Heart right ventricle (tissue), 16 donors: ENCODE measurements at regions of chr2 and their contacts with region 1.

Region 1: GRCh38 chr2:190843874-190844699 is 36.5 kb upstream of the GLS start:
- DNase-seq: no peak
- ATAC-seq: no peak
- H3K4me3 ChIP-seq: no peak overlapping the region
- H3K27ac ChIP-seq: no peak overlapping the region
- H3K4me1 ChIP-seq: peaks cover 0 to 13% (median 0%) of the 10 kb centered on the region in 9 donors
- H3K27me3 ChIP-seq: no peaks in the 10 kb centered on the region
- CTCF ChIP-seq: no peak

Region 2: GRCh38 chr2:191465766-191466420 is 621.8 kb after region 1 on chr2:
- intact Hi-C with region 1: loop called in 1 of 10 experiments (anchors 10 kb)
- DNase-seq: peak in 1 of 2 donors; percentile 56
- ATAC-seq: peak; percentile 66 to 96 (median 88)
- H3K4me3 ChIP-seq: no peak overlapping the region
- H3K27ac ChIP-seq: peak overlapping the region in 9 of 10 donors; percentile 12 to 77 (median 57)
- H3K4me1 ChIP-seq: peaks cover 0 to 27% (median 12%) of the 10 kb centered on the region in 9 donors
- H3K27me3 ChIP-seq: no peaks in the 10 kb centered on the region
- CTCF ChIP-seq: no peak